CD8-positive, alpha-beta T cell (primary cell): ENCODE measurements at regions of chr3 and their contacts with region 1.

Region 1: GRCh38 chr3:101724329-101725193 is at the start of gene CEP97:
- DNase-seq: peak; percentile 67 to 92 (median 87)
- ATAC-seq: peak; percentile 94
- H3K4me3 ChIP-seq: peak within 1 kb of the TSS; percentile 82 to 99
- H3K4me3 Mint-ChIP-seq: peak within 1 kb of the TSS; percentile 100
- H3K27ac ChIP-seq: peak within 1 kb of the TSS; percentile 62 to 83
- H3K27ac Mint-ChIP-seq: peak within 1 kb of the TSS; percentile 98
- H3K4me1 ChIP-seq: peaks cover 29% of the 10 kb centered on the region
- H3K4me1 Mint-ChIP-seq: peaks cover 37% of the 10 kb centered on the region
- H3K27me3 ChIP-seq: no peaks in the 10 kb centered on the region
- H3K27me3 Mint-ChIP-seq: no peaks in the 10 kb centered on the region
- CTCF ChIP-seq: no peak
- total RNA-seq, gene CEP97: 3.4 to 5.3 TPM

Region 2: DNA sequence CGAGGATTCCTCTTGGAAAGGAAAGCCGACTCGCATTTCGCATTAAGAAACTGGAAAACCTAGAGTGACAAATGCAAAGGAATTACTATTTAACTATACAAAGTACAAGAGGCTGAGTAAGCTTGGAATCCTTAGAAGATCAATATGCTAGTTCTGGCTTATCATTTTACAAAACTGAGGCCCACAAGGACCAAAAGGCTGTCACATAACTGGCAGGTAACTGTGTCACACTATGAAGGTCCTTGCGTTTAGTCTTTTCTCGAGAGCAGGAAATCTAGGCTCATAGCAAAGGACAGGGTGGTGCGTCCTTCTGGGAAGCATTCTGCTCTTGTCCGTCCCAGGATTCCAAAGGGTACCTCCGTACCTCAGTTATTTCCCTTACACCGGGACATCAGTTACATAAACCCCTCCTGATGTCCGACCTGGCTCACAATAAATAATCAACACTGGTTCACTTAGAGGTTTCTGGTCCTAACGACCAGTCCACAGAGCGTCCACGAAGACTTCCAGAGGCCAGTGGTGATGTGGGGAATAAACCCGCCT is 38.6 kb before region 1 on chr3:
- CTCF ChIA-PET with region 1: interaction called, 3 read pairs
- POLR2A ChIA-PET with region 1: interaction called, 7 read pairs
- intact Hi-C with region 1: loop called (anchors 1 to 2 kb)
- DNase-seq: no peak
- ATAC-seq: peak; percentile 3
- H3K4me3 ChIP-seq: peak overlapping the region; percentile 89 to 93
- H3K4me3 Mint-ChIP-seq: peak overlapping the region; percentile 100
- H3K27ac ChIP-seq: peak overlapping the region; percentile 94 to 96
- H3K27ac Mint-ChIP-seq: peak overlapping the region; percentile 99
- H3K4me1 ChIP-seq: peaks cover 39% of the 10 kb centered on the region
- H3K4me1 Mint-ChIP-seq: peaks cover 36% of the 10 kb centered on the region
- H3K27me3 ChIP-seq: no peaks in the 10 kb centered on the region
- H3K27me3 Mint-ChIP-seq: no peaks in the 10 kb centered on the region
- CTCF ChIP-seq: no peak

Region 3: GRCh38 chr3:101735833-101736232 is 11.3 kb after region 1 on chr3:
- CTCF ChIA-PET with region 1: interaction called, 3 read pairs
- POLR2A ChIA-PET with region 1: interaction called, 10 read pairs
- intact Hi-C with region 1: no loop called
- DNase-seq: peak in 2 of 9 experiments; percentile 36 to 49
- ATAC-seq: no peak
- H3K4me3 ChIP-seq: no peak overlapping the region
- H3K4me3 Mint-ChIP-seq: no peak overlapping the region
- H3K27ac ChIP-seq: no peak overlapping the region
- H3K27ac Mint-ChIP-seq: no peak overlapping the region
- H3K4me1 ChIP-seq: no peaks in the 10 kb centered on the region
- H3K4me1 Mint-ChIP-seq: peaks cover 5% of the 10 kb centered on the region
- H3K27me3 ChIP-seq: no peaks in the 10 kb centered on the region
- H3K27me3 Mint-ChIP-seq: no peaks in the 10 kb centered on the region
- CTCF ChIP-seq: no peak

Region 4: GRCh38 chr3:101827211-101828174 is 102.9 kb after region 1 on chr3:
- CTCF ChIA-PET with region 1: no interaction called
- POLR2A ChIA-PET with region 1: no interaction called
- intact Hi-C with region 1: loop called in 1 of 2 experiments (anchors 1 kb)
- DNase-seq: peak; percentile 54 to 92 (median 79)
- ATAC-seq: peak; percentile 84
- H3K4me3 ChIP-seq: peak overlapping the region; percentile 61 to 65
- H3K4me3 Mint-ChIP-seq: peak overlapping the region; percentile 94
- H3K27ac ChIP-seq: peak overlapping the region; percentile 72 to 90
- H3K27ac Mint-ChIP-seq: peak overlapping the region; percentile 98
- H3K4me1 ChIP-seq: peaks cover 35% of the 10 kb centered on the region
- H3K4me1 Mint-ChIP-seq: peaks cover 61% of the 10 kb centered on the region
- H3K27me3 ChIP-seq: no peaks in the 10 kb centered on the region
- H3K27me3 Mint-ChIP-seq: no peaks in the 10 kb centered on the region
- CTCF ChIP-seq: no peak

Region 5: DNA sequence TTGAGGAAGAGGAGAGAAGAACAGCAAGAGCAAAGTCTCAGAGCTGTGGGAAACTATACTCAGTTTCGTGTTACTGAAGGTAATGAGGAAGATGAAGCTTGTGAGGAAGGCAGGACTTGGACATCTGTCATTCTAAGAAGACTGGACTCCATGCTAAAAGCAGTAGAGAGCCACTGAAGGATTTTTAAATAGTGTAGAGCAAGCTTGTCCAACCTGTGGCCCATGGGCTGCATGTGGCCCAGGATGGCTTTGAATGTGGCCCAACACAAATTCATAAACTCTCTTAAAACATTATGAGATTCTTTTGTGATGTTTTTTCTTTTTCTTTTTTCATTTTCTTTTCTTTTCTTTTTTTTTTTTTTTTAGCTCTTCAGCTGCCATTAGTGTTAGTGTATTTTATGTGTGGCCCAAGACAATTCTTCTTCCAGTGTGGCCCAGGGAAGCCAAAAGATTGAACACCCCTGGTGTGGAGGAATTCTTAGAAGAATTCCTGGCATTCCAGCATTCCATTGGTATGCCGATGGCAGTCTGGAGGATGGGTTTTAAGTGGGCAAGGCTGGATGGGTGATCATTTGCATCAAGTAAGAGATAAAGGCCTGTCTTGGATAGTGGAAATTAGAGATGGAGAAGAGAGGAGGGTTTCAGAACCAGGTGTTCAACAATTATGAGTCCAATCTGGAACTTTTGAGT is 117.8 kb after region 1 on chr3:
- CTCF ChIA-PET with region 1: no interaction called
- POLR2A ChIA-PET with region 1: no interaction called
- intact Hi-C with region 1: no loop called
- DNase-seq: no peak
- ATAC-seq: no peak
- H3K4me3 ChIP-seq: no peak overlapping the region
- H3K4me3 Mint-ChIP-seq: no peak overlapping the region
- H3K27ac ChIP-seq: no peak overlapping the region
- H3K27ac Mint-ChIP-seq: no peak overlapping the region
- H3K4me1 ChIP-seq: no peaks in the 10 kb centered on the region
- H3K4me1 Mint-ChIP-seq: no peaks in the 10 kb centered on the region
- H3K27me3 ChIP-seq: no peaks in the 10 kb centered on the region
- H3K27me3 Mint-ChIP-seq: no peaks in the 10 kb centered on the region
- CTCF ChIP-seq: no peak